Natural killer cell (primary cell): ENCODE measurements at regions of chr19 and their contacts with region 1.

Region 1: GRCh38 chr19:45692187-45693105 is at the start of gene QPCTL:
- DNase-seq: peak; percentile 93 to 99
- ATAC-seq: peak; percentile 81 to 95 (median 86)
- H3K4me3 ChIP-seq: peak within 1 kb of the TSS; percentile 60
- H3K4me3 Mint-ChIP-seq: peak within 1 kb of the TSS; percentile 98
- H3K27ac ChIP-seq: peak within 1 kb of the TSS; percentile 95
- H3K27ac Mint-ChIP-seq: peak within 1 kb of the TSS; percentile 91 to 95
- H3K4me1 ChIP-seq: peaks cover 22% of the 10 kb centered on the region
- H3K4me1 Mint-ChIP-seq: peaks cover 17 to 24% of the 10 kb centered on the region in 2 donors
- H3K27me3 ChIP-seq: no peaks in the 10 kb centered on the region
- H3K27me3 Mint-ChIP-seq: no peaks in the 10 kb centered on the region
- CTCF ChIP-seq: no peak
- total RNA-seq, gene QPCTL: 8.7 to 11.5 (median 10.0) TPM

Region 2: DNA sequence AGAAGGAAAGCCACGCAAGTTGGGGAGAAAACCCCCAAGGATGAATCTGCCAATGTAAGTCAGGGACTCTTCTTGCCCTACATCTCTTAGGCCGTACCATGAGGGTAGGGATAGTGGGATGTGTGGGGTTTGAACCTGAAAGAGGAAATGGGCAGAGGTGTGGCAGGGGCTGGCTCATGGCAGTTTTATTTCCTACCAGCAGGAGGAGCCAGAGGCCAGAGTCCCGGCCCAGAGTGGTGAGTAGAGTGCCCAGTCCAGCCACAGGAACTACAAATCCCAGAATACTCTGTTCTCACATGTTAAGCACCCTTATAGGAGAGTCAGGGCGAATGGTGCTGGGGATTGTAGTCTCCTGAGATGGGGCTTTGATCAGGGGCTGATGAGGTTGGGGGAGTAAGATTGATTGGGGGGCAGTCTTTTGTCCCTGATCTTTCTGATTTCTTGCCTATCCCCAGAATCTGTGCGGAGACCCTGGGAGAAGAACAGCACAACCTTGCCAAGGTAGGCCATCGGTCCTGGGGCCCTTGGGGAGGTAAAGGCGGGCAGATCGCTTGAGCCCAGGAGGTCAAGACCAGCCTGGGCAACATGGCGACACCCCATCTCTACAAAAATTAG is 168.7 kb before region 1 on chr19:
- intact Hi-C with region 1: loop called (anchors 1 kb)
- DNase-seq: peak; percentile 70 to 90
- ATAC-seq: peak; percentile 99 to 100 (median 99)
- H3K4me3 ChIP-seq: no peak overlapping the region
- H3K4me3 Mint-ChIP-seq: no peak overlapping the region
- H3K27ac ChIP-seq: peak overlapping the region; percentile 13
- H3K27ac Mint-ChIP-seq: peak overlapping the region; percentile 75 to 78
- H3K4me1 ChIP-seq: peaks cover 19% of the 10 kb centered on the region
- H3K4me1 Mint-ChIP-seq: peaks cover 20 to 22% of the 10 kb centered on the region in 2 donors
- H3K27me3 ChIP-seq: no peaks in the 10 kb centered on the region
- H3K27me3 Mint-ChIP-seq: no peaks in the 10 kb centered on the region
- CTCF ChIP-seq: peak; percentile 75

Region 3: DNA sequence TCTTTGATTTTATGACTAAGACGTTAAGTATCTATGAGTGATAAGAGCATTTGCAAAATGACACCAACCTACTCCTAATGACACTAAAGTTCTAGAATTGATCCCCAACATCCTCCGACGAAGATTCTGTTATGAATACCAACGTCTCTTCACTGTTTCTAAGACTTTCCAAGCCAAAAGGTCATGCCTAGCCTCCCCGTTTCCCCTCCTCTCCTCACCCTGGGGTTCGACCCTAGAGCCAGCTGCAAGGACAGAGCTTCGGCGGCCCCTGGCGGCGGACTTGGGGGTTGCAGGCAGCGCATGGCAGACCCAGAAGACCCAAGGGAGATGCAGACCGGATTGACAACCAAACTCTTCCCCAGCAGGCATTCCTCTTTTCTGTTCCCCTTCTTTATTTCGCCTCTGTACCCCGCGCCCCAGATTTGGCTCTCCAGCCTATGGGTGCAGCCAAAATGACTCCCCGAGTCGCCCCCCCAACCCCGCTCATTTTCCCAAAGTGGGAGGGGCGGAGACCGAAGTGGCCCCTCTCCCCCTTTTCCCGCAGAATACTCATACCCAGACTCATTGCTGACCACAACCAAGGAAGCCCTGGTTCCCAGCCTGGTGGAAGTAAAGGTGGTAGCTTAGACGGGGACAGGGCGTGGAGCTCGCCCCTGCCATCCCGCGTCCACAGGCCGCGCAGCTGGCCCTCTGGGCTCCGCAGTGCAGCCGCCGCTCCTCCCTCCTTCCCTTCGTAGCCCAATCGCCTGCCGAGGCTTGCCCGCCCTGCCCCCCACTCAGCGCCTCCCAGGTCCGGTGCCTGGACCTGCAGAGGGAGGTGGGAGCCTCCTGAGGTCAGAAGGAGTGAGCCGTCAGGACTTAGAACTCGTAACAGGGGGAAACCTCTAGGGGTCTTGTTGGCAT is 49.2 kb before region 1 on chr19:
- intact Hi-C with region 1: loop called (anchors 1 kb)
- DNase-seq: peak; percentile 87 to 92
- ATAC-seq: peak; percentile 10 to 31 (median 14)
- H3K4me3 ChIP-seq: peak overlapping the region; percentile 9
- H3K4me3 Mint-ChIP-seq: peak overlapping the region; percentile 75
- H3K27ac ChIP-seq: peak overlapping the region; percentile 98
- H3K27ac Mint-ChIP-seq: peak overlapping the region; percentile 91 to 96
- H3K4me1 ChIP-seq: peaks cover 71% of the 10 kb centered on the region
- H3K4me1 Mint-ChIP-seq: peaks cover 47 to 71% of the 10 kb centered on the region in 2 donors
- H3K27me3 ChIP-seq: no peaks in the 10 kb centered on the region
- H3K27me3 Mint-ChIP-seq: no peaks in the 10 kb centered on the region
- CTCF ChIP-seq: peak; percentile 95

Region 4: DNA sequence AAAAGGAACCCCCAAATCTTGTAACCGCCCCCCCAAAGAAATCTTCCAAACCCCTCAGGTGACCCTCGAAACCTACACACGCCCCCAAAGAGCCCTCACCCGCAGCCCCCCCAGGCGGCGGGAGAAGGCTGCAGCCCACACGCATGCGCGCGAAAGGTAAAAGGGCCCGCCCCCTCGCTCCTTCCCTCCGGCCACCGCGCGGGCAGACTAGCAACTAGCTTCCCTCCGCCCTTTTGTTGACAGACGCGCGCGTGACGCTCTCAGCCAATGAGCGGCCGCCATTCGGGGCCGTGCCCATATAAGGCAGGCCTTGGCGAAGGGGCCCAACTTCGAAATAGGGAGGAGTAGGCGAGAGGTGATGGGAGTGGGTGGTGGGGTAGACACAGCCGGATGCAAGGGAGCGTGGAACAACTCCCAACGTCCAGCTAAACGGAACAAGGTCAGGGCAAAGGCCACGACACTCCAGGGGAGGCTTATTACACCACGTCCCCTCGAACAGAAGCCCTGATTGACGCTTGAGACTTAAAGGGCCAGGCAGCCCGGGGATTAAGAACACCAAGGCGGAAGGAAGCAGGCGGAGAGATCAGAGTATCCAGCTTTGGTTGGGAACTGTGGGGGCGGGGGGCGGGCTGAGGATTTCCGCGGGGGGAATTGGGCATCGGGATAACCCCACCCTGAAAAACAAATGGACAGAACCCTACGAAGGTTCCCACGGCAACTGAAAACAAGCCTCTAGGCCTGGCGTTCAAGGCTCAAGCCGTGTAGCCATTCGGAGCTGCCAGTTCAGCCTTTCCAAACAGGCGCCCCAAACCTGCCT is 24.9 kb after region 1 on chr19:
- intact Hi-C with region 1: loop called (anchors 1 kb)
- DNase-seq: peak; percentile 95 to 98
- ATAC-seq: peak; percentile 94 to 99 (median 95)
- H3K4me3 ChIP-seq: peak overlapping the region; percentile 63
- H3K4me3 Mint-ChIP-seq: peak overlapping the region; percentile 98
- H3K27ac ChIP-seq: peak overlapping the region; percentile 96
- H3K27ac Mint-ChIP-seq: peak overlapping the region; percentile 90 to 93
- H3K4me1 ChIP-seq: peaks cover 18% of the 10 kb centered on the region
- H3K4me1 Mint-ChIP-seq: peaks cover 25 to 35% of the 10 kb centered on the region in 2 donors
- H3K27me3 ChIP-seq: no peaks in the 10 kb centered on the region
- H3K27me3 Mint-ChIP-seq: no peaks in the 10 kb centered on the region
- CTCF ChIP-seq: no peak

Region 5: GRCh38 chr19:45886427-45887199 is 194.2 kb after region 1 on chr19:
- intact Hi-C with region 1: no loop called
- DNase-seq: peak; percentile 87 to 96
- ATAC-seq: peak; percentile 69 to 86 (median 73)
- H3K4me3 ChIP-seq: peak overlapping the region; percentile 72
- H3K4me3 Mint-ChIP-seq: peak overlapping the region; percentile 98
- H3K27ac ChIP-seq: peak overlapping the region; percentile 86
- H3K27ac Mint-ChIP-seq: peak overlapping the region; percentile 96 to 97
- H3K4me1 ChIP-seq: peaks cover 37% of the 10 kb centered on the region
- H3K4me1 Mint-ChIP-seq: peaks cover 17 to 32% of the 10 kb centered on the region in 2 donors
- H3K27me3 ChIP-seq: no peaks in the 10 kb centered on the region
- H3K27me3 Mint-ChIP-seq: peaks cover 0 to 3% of the 10 kb centered on the region in 2 donors
- CTCF ChIP-seq: no peak